Posterior cingulate gyrus (tissue), 11 donors: ENCODE measurements at regions of chr7 and their contacts with region 1.

Region 1: GRCh38 chr7:5284304-5285281 is 1.9 kb downstream of the SLC29A4 start:
- DNase-seq: peak; percentile 33 to 93 (median 60)

Region 2: GRCh38 chr7:5243261-5243660 is 41.3 kb before region 1 on chr7:
- intact Hi-C with region 1: loop called (anchors 5 kb)
- DNase-seq: no peak

Region 3: DNA sequence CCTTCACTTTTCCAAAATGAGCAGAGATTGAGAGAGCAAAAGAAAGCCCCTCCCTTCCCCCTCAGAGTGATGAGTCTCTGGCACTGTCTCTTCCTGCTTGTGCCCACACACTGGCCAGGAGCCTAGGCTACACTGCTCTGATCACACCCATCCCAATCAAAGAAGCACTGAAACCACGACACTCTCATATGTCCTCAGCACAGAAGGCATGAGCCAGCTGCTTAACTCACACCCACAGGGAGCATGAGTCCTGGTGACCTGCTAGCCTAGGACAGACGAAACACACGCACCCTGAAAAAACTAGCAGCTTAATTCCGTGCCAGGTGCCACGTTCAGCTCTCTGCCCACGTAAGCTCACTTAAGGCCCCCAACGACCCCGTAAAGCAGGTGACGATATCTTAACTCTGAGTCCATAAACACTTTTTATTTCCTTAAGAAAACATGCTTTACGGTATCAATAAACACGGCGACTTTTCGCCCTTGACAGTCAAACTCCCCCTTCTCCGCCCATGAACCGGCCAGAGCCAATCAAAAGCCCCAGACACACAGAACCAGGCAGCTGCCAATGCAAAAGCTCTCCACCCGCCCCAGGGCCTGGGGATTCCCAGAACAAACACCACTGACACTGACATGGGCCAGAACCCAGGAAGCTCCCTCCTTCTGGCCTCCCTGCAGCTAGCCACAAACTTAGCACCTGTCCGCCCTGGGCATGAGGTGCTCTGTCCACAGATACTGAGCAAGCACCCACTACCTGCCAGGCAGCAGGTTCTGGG is 70.1 kb after region 1 on chr7:
- intact Hi-C with region 1: no loop called
- DNase-seq: peak in 1 of 10 donors; percentile 74